ENCODE measurements at regions of chr10 and their contacts with region 1.

Region 1: GRCh38 chr10:14536241-14537213 is 205.8 kb upstream of the FRMD4A start:
- DNase-seq: peak; percentile 73
- H3K4me3 ChIP-seq: no peak overlapping the region; a peak in 1 of 4 replicates
- H3K27ac ChIP-seq: no peak overlapping the region
- H3K4me1 ChIP-seq: no peaks in the 10 kb centered on the region; a peak in 1 of 4 replicates
- H3K27me3 ChIP-seq: no peaks in the 10 kb centered on the region
- CTCF ChIP-seq: peak; percentile 61
- EP300 ChIP-seq: no peak
- RAD21 ChIP-seq: peak; percentile 94

Region 2: DNA sequence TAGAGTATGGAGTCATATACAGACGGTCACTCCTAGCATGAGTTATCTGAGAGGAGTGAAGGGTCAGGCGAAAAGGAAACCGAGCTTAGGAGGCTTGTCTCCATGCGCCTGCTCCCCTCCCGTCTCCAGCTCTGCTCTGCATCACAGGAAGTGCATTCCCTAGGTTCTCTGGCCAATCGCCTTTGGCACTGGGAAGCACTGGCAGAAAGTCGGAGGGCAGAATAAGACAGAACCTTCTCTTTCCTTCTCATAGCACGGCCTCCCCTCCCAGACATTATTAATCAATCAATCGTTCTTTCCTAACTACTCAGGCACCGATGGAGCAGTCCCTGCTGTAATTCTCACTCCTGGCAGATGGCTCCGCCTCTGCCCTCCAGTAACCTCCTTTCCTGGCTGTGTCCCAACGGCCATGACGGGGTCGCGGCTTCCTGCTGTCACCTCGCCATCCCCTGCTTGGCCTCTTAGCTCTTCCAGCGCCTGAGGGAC is 382.9 kb before region 1 on chr10:
- CTCF ChIA-PET with region 1: no interaction called
- POLR2A ChIA-PET with region 1: no interaction called
- DNase-seq: no peak
- H3K4me3 ChIP-seq: no peak overlapping the region
- H3K27ac ChIP-seq: no peak overlapping the region
- H3K4me1 ChIP-seq: no peaks in the 10 kb centered on the region; a peak in 1 of 4 replicates
- H3K27me3 ChIP-seq: no peaks in the 10 kb centered on the region
- CTCF ChIP-seq: no peak
- EP300 ChIP-seq: no peak
- RAD21 ChIP-seq: no peak

Region 3: GRCh38 chr10:14557567-14557966 is 21.0 kb after region 1 on chr10:
- CTCF ChIA-PET with region 1: interaction called, 12 read pairs
- POLR2A ChIA-PET with region 1: no interaction called
- DNase-seq: no peak
- H3K4me3 ChIP-seq: no peak overlapping the region
- H3K27ac ChIP-seq: no peak overlapping the region
- H3K4me1 ChIP-seq: no peaks in the 10 kb centered on the region; a peak in 2 of 4 replicates
- H3K27me3 ChIP-seq: no peaks in the 10 kb centered on the region
- CTCF ChIP-seq: no peak
- EP300 ChIP-seq: no peak
- RAD21 ChIP-seq: no peak

Region 4: DNA sequence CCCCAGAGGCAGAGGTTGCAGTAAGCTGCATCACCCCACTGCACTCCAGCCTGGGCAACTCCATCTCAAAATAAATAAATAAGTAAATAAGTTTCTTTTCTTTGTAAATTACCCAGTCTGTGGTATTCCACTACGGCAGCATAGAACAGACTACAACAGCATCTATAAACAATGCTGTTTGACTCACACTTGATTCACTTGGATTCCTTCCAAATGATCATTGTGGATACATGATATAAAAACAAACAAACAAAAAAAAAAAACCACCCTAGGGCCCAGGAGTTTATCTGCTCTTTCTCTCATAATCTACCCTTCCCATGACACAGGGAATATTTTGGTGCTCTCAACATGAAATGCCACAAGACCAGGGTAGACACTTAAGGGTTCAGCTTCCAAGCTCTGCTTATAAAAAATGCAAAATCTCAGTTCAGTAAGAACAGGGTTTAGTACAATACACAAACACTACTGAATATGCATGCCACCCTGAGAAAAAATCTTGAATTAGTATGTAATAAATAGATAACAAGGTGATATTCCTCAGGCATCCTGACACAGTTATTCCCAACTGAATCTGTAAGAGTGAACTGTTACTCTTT is 37.2 kb after region 1 on chr10:
- CTCF ChIA-PET with region 1: interaction called, 10 read pairs
- POLR2A ChIA-PET with region 1: no interaction called
- DNase-seq: no peak
- H3K4me3 ChIP-seq: no peak overlapping the region
- H3K27ac ChIP-seq: peak overlapping the region in 1 of 2 experiments; percentile 47; a peak in 2 of 4 replicates
- H3K4me1 ChIP-seq: peaks cover 0 to 10% of the 10 kb centered on the region in 2 experiments; a peak in 2 of 4 replicates
- H3K27me3 ChIP-seq: no peaks in the 10 kb centered on the region
- CTCF ChIP-seq: no peak
- EP300 ChIP-seq: no peak
- RAD21 ChIP-seq: no peak

Region 5: GRCh38 chr10:14653271-14654228 is 117.0 kb after region 1 on chr10:
- CTCF ChIA-PET with region 1: interaction called, 16 read pairs
- POLR2A ChIA-PET with region 1: no interaction called
- DNase-seq: peak; percentile 42
- H3K4me3 ChIP-seq: no peak overlapping the region
- H3K27ac ChIP-seq: peak overlapping the region in 1 of 2 experiments; percentile 90; a peak in 2 of 4 replicates
- H3K4me1 ChIP-seq: peaks cover 12 to 33% of the 10 kb centered on the region in 2 experiments; a peak in 3 of 4 replicates
- H3K27me3 ChIP-seq: no peaks in the 10 kb centered on the region
- CTCF ChIP-seq: no peak
- EP300 ChIP-seq: peak in 1 of 2 experiments; percentile 88; a peak in 2 of 4 replicates
- RAD21 ChIP-seq: peak; percentile 41

Region 6: GRCh38 chr10:14812271-14812670 is 275.7 kb after region 1 on chr10:
- CTCF ChIA-PET with region 1: interaction called, 10 read pairs
- POLR2A ChIA-PET with region 1: no interaction called
- DNase-seq: no peak
- H3K4me3 ChIP-seq: no peak overlapping the region
- H3K27ac ChIP-seq: no peak overlapping the region
- H3K4me1 ChIP-seq: no peaks in the 10 kb centered on the region
- H3K27me3 ChIP-seq: no peaks in the 10 kb centered on the region
- CTCF ChIP-seq: no peak
- EP300 ChIP-seq: no peak
- RAD21 ChIP-seq: no peak

Region 7: GRCh38 chr10:14822879-14823755 is 286.6 kb after region 1 on chr10:
- CTCF ChIA-PET with region 1: interaction called, 54 read pairs
- POLR2A ChIA-PET with region 1: no interaction called
- DNase-seq: peak; percentile 62
- H3K4me3 ChIP-seq: no peak overlapping the region
- H3K27ac ChIP-seq: peak overlapping the region in 1 of 2 experiments; percentile 19; a peak in 1 of 4 replicates
- H3K4me1 ChIP-seq: peaks cover 0 to 5% of the 10 kb centered on the region in 2 experiments; a peak in 1 of 4 replicates
- H3K27me3 ChIP-seq: no peaks in the 10 kb centered on the region; the same call in 1 of the 2 replicates
- CTCF ChIP-seq: peak; percentile 75
- EP300 ChIP-seq: peak in 1 of 2 experiments; percentile 65; a peak in 1 of 4 replicates
- RAD21 ChIP-seq: peak; percentile 86

Region 8: DNA sequence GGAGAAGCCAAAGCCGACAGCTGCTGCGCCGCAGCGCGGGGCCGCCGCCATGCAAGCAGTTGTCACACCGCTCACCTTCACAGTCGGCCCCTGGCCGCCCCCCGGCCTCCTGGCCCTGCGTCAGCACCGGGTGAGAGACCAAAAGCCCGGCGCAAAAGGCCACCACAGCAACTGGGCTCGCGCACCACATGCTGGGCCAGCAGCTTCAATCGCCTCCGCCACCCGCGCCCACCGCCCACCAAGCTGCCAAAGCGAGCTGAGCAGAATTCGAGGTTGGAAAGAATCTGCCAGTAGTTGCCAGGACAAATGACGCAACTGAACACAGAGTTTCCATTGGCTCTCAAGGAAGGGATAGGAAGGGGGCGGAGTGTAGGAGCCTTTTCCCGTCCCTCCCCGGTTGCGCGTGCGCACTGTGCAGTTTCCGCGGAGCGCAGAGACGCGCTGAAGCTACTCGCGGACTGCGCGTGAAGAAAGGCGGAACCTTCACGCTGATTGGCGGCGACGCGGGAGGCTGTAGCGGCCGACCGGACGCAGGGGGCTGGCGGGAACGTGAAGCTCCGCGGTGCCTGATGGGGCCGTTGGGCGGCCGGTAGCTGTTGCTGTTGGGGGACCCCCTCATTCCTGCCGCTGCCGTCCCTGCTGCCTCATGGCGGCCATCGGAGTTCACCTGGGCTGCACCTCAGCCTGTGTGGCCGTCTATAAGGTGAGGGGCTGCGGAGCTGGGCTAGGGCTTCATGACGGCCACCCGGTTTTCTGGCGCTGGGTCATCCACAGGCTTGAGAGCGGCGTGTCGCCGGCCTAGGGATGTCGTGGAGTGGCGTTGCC is 301.4 kb after region 1 on chr10 and contains the starts of genes CDNF, HSPA14 and MSANTD7:
- CTCF ChIA-PET with region 1: interaction called, 17 read pairs
- POLR2A ChIA-PET with region 1: no interaction called
- DNase-seq: peak; percentile 97
- H3K4me3 ChIP-seq: peak within 1 kb of the TSS; percentile 93 to 99
- H3K27ac ChIP-seq: peak within 1 kb of the TSS; percentile 81 to 93
- H3K4me1 ChIP-seq: peaks cover 0 to 7% of the 10 kb centered on the region in 2 experiments; a peak in 1 of 4 replicates
- H3K27me3 ChIP-seq: no peaks in the 10 kb centered on the region
- CTCF ChIP-seq: no peak
- EP300 ChIP-seq: no peak
- RAD21 ChIP-seq: no peak
- polyA plus RNA-seq, gene CDNF: 1.0 and 1.2 TPM in 2 replicates
- polyA plus RNA-seq, gene HSPA14: 8.8 and 10.8 TPM in 2 replicates
- polyA plus RNA-seq, gene MSANTD7: 3.2 and 3.9 TPM in 2 replicates

Region 9: DNA sequence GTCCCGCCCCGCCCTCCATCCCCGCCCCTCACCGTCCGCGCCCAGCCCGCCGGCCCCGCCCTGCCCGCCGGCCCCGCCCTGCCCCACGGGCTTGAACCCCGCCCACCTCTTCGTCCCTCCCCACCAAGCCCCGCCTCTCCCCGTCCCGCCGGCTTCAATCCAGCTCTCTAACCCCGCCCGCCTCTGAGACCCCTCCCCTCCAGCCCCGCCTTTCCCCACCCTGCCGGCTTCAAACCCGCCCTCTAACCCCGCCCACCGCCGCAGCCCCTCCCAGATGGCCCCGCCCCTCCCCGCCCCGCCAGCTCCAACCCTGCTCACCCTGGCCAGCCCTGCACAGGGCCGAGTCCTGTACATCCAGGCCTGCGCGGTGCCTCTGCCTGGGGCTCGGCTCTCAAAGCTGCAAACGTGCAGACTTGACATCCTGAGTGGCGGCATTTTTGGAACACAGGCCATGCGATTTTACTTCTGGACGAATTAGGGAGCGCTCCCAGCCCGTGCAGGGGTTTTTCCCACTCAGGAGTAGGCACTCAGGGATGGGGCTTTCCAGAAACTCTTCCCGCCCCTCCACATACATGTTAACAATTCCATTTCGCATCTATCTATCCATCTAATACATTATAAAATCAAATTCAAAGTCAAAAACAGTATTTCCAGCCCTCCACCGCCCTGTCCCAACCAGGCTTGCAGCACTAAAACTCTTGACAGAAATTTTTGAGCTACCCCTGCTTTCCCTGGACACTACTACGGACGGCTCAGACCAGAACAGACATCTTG is 632.4 kb after region 1 on chr10:
- CTCF ChIA-PET with region 1: no interaction called
- POLR2A ChIA-PET with region 1: no interaction called
- DNase-seq: peak; percentile 98
- H3K4me3 ChIP-seq: peak overlapping the region in 1 of 2 experiments; percentile 19; a peak in 1 of 4 replicates
- H3K27ac ChIP-seq: peak overlapping the region in 1 of 2 experiments; percentile 86; a peak in 3 of 4 replicates
- H3K4me1 ChIP-seq: peaks cover 4 to 25% of the 10 kb centered on the region in 2 experiments
- H3K27me3 ChIP-seq: no peaks in the 10 kb centered on the region
- CTCF ChIP-seq: no peak
- EP300 ChIP-seq: no peak
- RAD21 ChIP-seq: no peak